Endothelial cell of umbilical vein (primary cell): ENCODE measurements at regions of chr21 and their contacts with region 1.

Region 1: GRCh38 chr21:45309069-45309986 is 21.6 kb upstream of the POFUT2 start:
- DNase-seq: peak; percentile 89
- H3K4me3 ChIP-seq: no peak overlapping the region
- H3K27ac ChIP-seq: peak overlapping the region; percentile 84
- H3K4me1 ChIP-seq: peaks cover 18% of the 10 kb centered on the region
- H3K27me3 ChIP-seq: no peaks in the 10 kb centered on the region
- CTCF ChIP-seq: peak; percentile 76 to 93
- POLR2A ChIP-seq: no peak

Region 2: GRCh38 chr21:45294509-45295291 is 14.6 kb before region 1 on chr21:
- CTCF ChIA-PET with region 1: interaction called, 48 read pairs
- POLR2A ChIA-PET with region 1: interaction called, 3 read pairs
- dilution Hi-C with region 1: no loop called
- intact Hi-C with region 1: loop called (anchors 1 kb)
- DNase-seq: peak; percentile 98
- H3K4me3 ChIP-seq: no peak overlapping the region
- H3K27ac ChIP-seq: peak overlapping the region; percentile 100
- H3K4me1 ChIP-seq: peaks cover 35% of the 10 kb centered on the region
- H3K27me3 ChIP-seq: no peaks in the 10 kb centered on the region
- CTCF ChIP-seq: no peak
- POLR2A ChIP-seq: peak; percentile 87

Region 3: DNA sequence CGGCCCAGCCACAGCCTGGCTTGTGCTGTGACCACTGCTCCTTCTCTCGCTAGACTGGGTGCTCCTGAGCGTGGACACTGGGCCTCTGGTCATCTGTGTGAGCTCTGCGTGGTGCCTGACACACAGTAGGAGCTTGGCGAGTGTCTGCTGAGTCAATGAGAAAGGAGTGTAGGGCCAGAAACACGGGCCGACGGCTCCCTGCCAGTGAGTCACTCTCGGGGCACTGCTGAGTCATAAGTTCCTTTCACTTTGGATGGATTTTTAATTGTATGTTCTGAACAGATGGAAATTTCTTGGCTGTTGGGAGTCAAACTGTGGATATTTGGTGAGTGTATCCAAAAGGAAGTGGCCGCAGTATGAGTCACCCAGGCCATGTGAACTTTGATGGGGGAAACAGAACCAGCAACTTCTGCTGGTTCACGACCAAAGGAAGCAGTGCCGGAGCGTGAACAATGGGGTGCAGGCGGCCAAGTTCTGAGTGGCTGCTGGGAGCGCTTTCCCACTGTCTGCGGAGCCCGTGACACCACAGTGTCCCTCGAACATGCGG is 54.7 kb after region 1 on chr21:
- CTCF ChIA-PET with region 1: interaction called, 13 read pairs
- POLR2A ChIA-PET with region 1: no interaction called
- dilution Hi-C with region 1: no loop called
- intact Hi-C with region 1: no loop called
- DNase-seq: peak; percentile 99
- H3K4me3 ChIP-seq: no peak overlapping the region
- H3K27ac ChIP-seq: peak overlapping the region; percentile 96
- H3K4me1 ChIP-seq: peaks cover 42% of the 10 kb centered on the region
- H3K27me3 ChIP-seq: no peaks in the 10 kb centered on the region
- CTCF ChIP-seq: no peak
- POLR2A ChIP-seq: peak; percentile 49

Region 4: GRCh38 chr21:45404730-45405270 is 95.5 kb after region 1 on chr21 and contains the start of gene COL18A1:
- CTCF ChIA-PET with region 1: interaction called, 24 read pairs
- POLR2A ChIA-PET with region 1: no interaction called
- dilution Hi-C with region 1: no loop called
- intact Hi-C with region 1: loop called (anchors 2 kb)
- DNase-seq: peak; percentile 39
- H3K4me3 ChIP-seq: peak within 1 kb of the TSS; percentile 72 to 87 (median 79)
- H3K27ac ChIP-seq: peak within 1 kb of the TSS; percentile 95
- H3K4me1 ChIP-seq: peaks cover 18% of the 10 kb centered on the region
- H3K27me3 ChIP-seq: no peaks in the 10 kb centered on the region
- CTCF ChIP-seq: no peak
- POLR2A ChIP-seq: no peak
- total RNA-seq, gene COL18A1: 252 and 274 TPM in 2 replicates